ENCODE measurements at regions of chr15 and their contacts with region 1.

Region 1: GRCh38 chr15:85485956-85486567 is 105.7 kb downstream of the AKAP13 start:
- DNase-seq: peak; percentile 56 to 72
- H3K4me3 ChIP-seq: no peak overlapping the region
- H3K4me3 Mint-ChIP-seq: no peak overlapping the region
- H3K27ac Mint-ChIP-seq: no peak overlapping the region
- H3K4me1 ChIP-seq: peaks cover 7% of the 10 kb centered on the region
- H3K4me1 Mint-ChIP-seq: peaks cover 30% of the 10 kb centered on the region
- H3K27me3 ChIP-seq: no peaks in the 10 kb centered on the region
- H3K27me3 Mint-ChIP-seq: no peaks in the 10 kb centered on the region
- CTCF ChIP-seq: peak in 1 of 2 experiments; percentile 61

Region 2: GRCh38 chr15:85330901-85331588 is 155.0 kb before region 1 on chr15:
- CTCF ChIA-PET with region 1: interaction called, 4 read pairs
- POLR2A ChIA-PET with region 1: no interaction called
- intact Hi-C with region 1: loop called (anchors 5 kb)
- DNase-seq: peak; percentile 77 to 82
- H3K4me3 ChIP-seq: no peak overlapping the region
- H3K4me3 Mint-ChIP-seq: no peak overlapping the region
- H3K27ac Mint-ChIP-seq: peak overlapping the region; percentile 81
- H3K4me1 ChIP-seq: peaks cover 47% of the 10 kb centered on the region
- H3K4me1 Mint-ChIP-seq: peaks cover 15% of the 10 kb centered on the region
- H3K27me3 ChIP-seq: no peaks in the 10 kb centered on the region
- H3K27me3 Mint-ChIP-seq: no peaks in the 10 kb centered on the region
- CTCF ChIP-seq: peak; percentile 42 to 61

Region 3: DNA sequence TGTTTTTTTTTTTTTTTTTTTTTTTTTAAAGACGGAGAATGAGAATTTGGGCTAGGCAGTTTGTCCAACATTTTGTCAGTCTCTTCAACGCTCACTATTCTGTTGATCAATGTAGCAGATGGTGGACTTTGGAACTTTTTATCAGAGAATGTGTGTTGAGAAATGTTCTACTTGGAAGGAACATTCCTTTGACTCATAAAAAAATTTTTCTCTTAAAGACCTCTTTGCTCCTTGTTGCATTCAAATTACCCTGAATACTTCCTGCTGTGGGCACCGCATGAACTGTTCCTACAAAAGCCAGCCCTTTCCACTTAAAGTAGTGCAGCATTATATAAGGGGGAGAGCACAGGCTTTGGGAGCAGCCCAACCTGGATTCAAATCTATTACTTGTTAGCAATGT is 77.3 kb after region 1 on chr15:
- CTCF ChIA-PET with region 1: no interaction called
- POLR2A ChIA-PET with region 1: no interaction called
- intact Hi-C with region 1: loop called (anchors 1 kb)
- DNase-seq: peak; percentile 71 to 79
- H3K4me3 ChIP-seq: no peak overlapping the region
- H3K4me3 Mint-ChIP-seq: peak overlapping the region; percentile 21
- H3K27ac Mint-ChIP-seq: peak overlapping the region; percentile 65
- H3K4me1 ChIP-seq: peaks cover 44% of the 10 kb centered on the region
- H3K4me1 Mint-ChIP-seq: peaks cover 23% of the 10 kb centered on the region
- H3K27me3 ChIP-seq: no peaks in the 10 kb centered on the region
- H3K27me3 Mint-ChIP-seq: no peaks in the 10 kb centered on the region
- CTCF ChIP-seq: no peak

Region 4: GRCh38 chr15:85615930-85616329 is 129.9 kb after region 1 on chr15:
- CTCF ChIA-PET with region 1: interaction called, 4 read pairs
- POLR2A ChIA-PET with region 1: no interaction called
- intact Hi-C with region 1: loop called (anchors 1 kb)
- DNase-seq: peak in 1 of 2 experiments; percentile 57
- H3K4me3 ChIP-seq: no peak overlapping the region
- H3K4me3 Mint-ChIP-seq: no peak overlapping the region
- H3K27ac Mint-ChIP-seq: no peak overlapping the region
- H3K4me1 ChIP-seq: peaks cover 8% of the 10 kb centered on the region
- H3K4me1 Mint-ChIP-seq: peaks cover 10% of the 10 kb centered on the region
- H3K27me3 ChIP-seq: no peaks in the 10 kb centered on the region
- H3K27me3 Mint-ChIP-seq: no peaks in the 10 kb centered on the region
- CTCF ChIP-seq: peak; percentile 57 to 72